MCF 10A (cell line): ENCODE measurements at regions of chr2 and their contacts with region 1.

Region 1: DNA sequence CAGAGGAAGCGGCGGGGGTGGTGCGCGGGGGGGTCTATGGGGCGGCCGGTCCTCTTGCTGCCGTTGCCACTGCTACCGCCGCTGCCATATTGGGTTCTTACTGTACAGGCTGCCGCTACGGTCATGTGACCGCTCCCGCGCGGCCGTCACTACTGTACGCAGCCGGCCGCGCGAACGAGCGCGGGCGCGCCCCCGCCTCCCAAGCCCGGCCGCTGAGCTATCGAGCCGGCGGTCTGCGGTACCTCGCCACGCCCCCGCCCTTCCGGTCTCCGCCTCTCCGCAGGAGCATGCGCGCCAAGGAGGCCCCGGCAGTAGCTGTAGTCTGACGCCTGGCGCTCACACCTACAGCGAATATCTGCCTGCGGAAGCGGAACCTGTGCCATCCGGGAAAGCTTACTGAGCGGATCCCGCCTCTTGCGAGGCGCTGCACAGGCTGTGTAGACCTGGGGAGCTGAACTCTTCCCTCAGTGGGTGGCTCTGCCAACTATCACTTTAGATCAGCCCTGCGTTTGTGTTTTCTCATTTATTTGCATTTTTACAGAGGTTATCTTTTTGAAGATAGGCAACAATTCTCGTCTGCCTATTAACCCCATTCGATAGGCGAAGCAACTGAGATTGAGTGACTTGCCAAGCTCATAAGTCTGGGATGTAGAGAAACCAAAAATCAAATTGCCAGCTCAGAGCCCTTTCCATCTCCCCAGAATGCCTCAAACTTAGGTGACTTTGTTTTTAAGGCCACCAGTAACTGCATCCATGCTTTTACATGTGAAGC is at the start of gene ASXL2:
- DNase-seq: peak; percentile 95
- H3K4me3 Mint-ChIP-seq: peak within 1 kb of the TSS; percentile 95
- H3K27ac Mint-ChIP-seq: peak within 1 kb of the TSS; percentile 83
- H3K4me1 Mint-ChIP-seq: peaks cover 28% of the 10 kb centered on the region
- H3K27me3 Mint-ChIP-seq: no peaks in the 10 kb centered on the region
- CTCF ChIP-seq: no peak
- total RNA-seq, gene ASXL2: 34.0 and 35.3 TPM in 2 replicates

Region 2: GRCh38 chr2:25867396-25868003 is 11.0 kb before region 1 on chr2:
- CTCF ChIA-PET with region 1: interaction called, 3 read pairs
- POLR2A ChIA-PET with region 1: interaction called, 12 read pairs
- intact Hi-C with region 1: no loop called
- DNase-seq: no peak
- H3K4me3 Mint-ChIP-seq: no peak overlapping the region
- H3K27ac Mint-ChIP-seq: no peak overlapping the region
- H3K4me1 Mint-ChIP-seq: no peaks in the 10 kb centered on the region
- H3K27me3 Mint-ChIP-seq: no peaks in the 10 kb centered on the region
- CTCF ChIP-seq: no peak

Region 3: GRCh38 chr2:25920326-25920725 is 41.8 kb after region 1 on chr2:
- CTCF ChIA-PET with region 1: no interaction called
- POLR2A ChIA-PET with region 1: no interaction called
- intact Hi-C with region 1: no loop called
- DNase-seq: peak; percentile 57
- H3K4me3 Mint-ChIP-seq: no peak overlapping the region
- H3K27ac Mint-ChIP-seq: no peak overlapping the region
- H3K4me1 Mint-ChIP-seq: no peaks in the 10 kb centered on the region
- H3K27me3 Mint-ChIP-seq: no peaks in the 10 kb centered on the region
- CTCF ChIP-seq: no peak